WTC11 (cell line): ENCODE measurements at regions of chr5 and their contacts with region 1.

Region 1: GRCh38 chr5:10627160-10627701 is 63.4 kb downstream of the ANKRD33B start:
- DNase-seq: peak; percentile 34
- ATAC-seq: peak; percentile 20
- H3K4me3 Mint-ChIP-seq: peak overlapping the region; percentile 76
- H3K27ac Mint-ChIP-seq: peak overlapping the region; percentile 89
- H3K4me1 Mint-ChIP-seq: peaks cover 34% of the 10 kb centered on the region
- H3K27me3 Mint-ChIP-seq: no peaks in the 10 kb centered on the region; the same call in none of the 2 replicates
- CTCF ChIP-seq: no peak

Region 2: DNA sequence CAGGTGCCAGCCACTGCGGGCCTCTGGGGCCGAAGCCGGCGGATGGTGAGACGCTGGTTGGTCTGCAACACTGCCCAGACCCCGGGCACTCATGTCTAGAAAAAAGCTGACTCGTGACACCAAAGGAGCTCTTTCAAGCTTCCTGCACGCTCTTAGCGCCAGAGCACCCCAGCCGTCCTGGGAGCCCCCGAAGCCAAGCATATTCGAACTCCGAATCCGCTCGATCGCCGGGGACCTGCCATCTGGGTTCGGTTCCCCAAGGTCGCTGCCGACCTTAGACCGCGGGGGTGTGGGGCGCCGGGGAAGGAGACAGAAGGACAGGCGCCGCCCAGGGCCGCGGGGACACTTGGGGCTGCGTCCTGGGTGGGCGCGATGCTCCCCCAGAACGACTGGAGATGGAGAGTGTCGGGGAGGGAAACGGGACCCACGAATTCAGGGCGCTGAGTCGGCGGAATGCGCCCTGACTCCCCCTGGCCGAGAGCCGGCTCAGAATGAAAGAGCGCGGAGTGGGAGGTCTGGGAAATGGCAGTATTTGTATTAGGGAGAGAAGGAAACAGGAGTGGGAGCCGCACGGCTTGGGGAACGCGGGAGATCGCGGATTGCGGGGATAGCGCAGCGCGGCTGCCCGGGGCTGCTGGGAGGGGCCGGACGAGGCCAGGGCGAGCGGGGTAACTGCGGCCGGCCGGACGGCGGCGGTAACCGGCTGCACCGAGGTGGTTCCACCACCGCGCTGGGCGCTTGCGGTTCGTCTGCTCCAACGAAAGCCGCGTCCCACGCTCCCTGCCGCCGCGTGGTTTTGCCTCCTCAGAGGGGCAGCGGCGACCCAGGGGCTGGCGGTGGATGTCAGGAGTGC is 293.9 kb before region 1 on chr5:
- CTCF ChIA-PET with region 1: no interaction called
- POLR2A ChIA-PET with region 1: no interaction called
- DNase-seq: peak; percentile 65
- ATAC-seq: peak; percentile 87
- H3K4me3 Mint-ChIP-seq: peak overlapping the region; percentile 90
- H3K27ac Mint-ChIP-seq: no peak overlapping the region
- H3K4me1 Mint-ChIP-seq: no peaks in the 10 kb centered on the region
- H3K27me3 Mint-ChIP-seq: peaks cover 73% of the 10 kb centered on the region
- CTCF ChIP-seq: no peak

Region 3: GRCh38 chr5:10452768-10453331 is 174.4 kb before region 1 on chr5:
- CTCF ChIA-PET with region 1: interaction called, 142 read pairs
- POLR2A ChIA-PET with region 1: interaction called, 3 read pairs
- DNase-seq: no peak
- ATAC-seq: peak; percentile 75
- H3K4me3 Mint-ChIP-seq: no peak overlapping the region
- H3K27ac Mint-ChIP-seq: no peak overlapping the region
- H3K4me1 Mint-ChIP-seq: peaks cover 30% of the 10 kb centered on the region
- H3K27me3 Mint-ChIP-seq: no peaks in the 10 kb centered on the region
- CTCF ChIP-seq: no peak

Region 4: GRCh38 chr5:10501554-10502075 is 125.6 kb before region 1 on chr5:
- CTCF ChIA-PET with region 1: interaction called, 10 read pairs
- POLR2A ChIA-PET with region 1: interaction called, 4 read pairs
- DNase-seq: no peak
- ATAC-seq: no peak
- H3K4me3 Mint-ChIP-seq: no peak overlapping the region
- H3K27ac Mint-ChIP-seq: no peak overlapping the region
- H3K4me1 Mint-ChIP-seq: peaks cover 11% of the 10 kb centered on the region
- H3K27me3 Mint-ChIP-seq: no peaks in the 10 kb centered on the region
- CTCF ChIP-seq: no peak

Region 5: DNA sequence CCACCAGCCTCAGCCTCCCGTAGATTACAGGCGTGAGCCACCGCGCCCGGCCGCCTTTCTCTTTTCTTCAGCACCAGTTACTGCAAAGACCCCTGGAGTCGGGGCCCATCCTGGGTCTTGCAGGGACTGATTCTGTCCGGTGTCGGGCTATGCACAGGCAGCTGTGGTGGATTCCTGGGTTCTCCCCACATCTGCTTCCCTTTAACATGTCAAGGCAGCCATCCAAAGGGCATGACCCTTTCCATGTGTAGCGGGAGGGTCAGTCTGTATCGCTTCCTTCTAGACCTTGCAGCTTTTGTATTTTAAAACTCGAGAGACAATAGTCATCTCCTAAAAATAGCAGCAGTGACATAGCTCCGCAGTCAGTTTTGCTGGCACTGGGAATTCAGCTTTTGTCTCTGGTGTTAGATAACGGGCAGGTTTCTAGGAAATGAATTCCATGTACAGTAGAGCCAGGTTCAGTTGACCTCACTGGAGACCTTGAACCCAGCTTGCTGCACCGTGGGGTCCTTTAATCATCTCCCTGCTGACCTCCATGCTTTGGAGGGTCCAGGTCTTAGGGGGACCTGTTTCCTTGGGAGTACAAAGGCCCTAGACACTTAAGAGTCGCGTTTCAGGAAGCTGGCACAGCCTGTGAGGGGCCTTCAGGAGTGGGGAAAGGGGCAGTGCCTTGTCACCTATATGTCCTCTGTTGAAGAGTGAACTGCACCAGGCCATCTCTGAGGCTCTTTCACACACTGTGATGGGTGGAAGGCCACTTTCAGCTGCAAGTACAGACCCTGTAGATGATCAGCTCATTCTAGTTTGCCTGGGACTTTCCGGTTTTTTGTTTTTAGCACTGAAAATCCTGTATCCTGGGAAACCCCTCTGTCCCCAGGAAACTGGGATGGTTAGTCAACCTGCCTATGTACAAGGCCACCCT is 49.6 kb before region 1 on chr5:
- CTCF ChIA-PET with region 1: interaction called, 21 read pairs
- POLR2A ChIA-PET with region 1: no interaction called
- DNase-seq: no peak
- ATAC-seq: no peak
- H3K4me3 Mint-ChIP-seq: no peak overlapping the region
- H3K27ac Mint-ChIP-seq: no peak overlapping the region
- H3K4me1 Mint-ChIP-seq: peaks cover 12% of the 10 kb centered on the region
- H3K27me3 Mint-ChIP-seq: no peaks in the 10 kb centered on the region
- CTCF ChIP-seq: no peak

Region 6: GRCh38 chr5:10617103-10617502 is 10.1 kb before region 1 on chr5:
- CTCF ChIA-PET with region 1: interaction called, 12 read pairs
- POLR2A ChIA-PET with region 1: interaction called, 3 read pairs
- DNase-seq: no peak
- ATAC-seq: no peak
- H3K4me3 Mint-ChIP-seq: no peak overlapping the region
- H3K27ac Mint-ChIP-seq: no peak overlapping the region; the same call in 1 of the 2 replicates
- H3K4me1 Mint-ChIP-seq: peaks cover 11% of the 10 kb centered on the region
- H3K27me3 Mint-ChIP-seq: no peaks in the 10 kb centered on the region; the same call in 1 of the 2 replicates
- CTCF ChIP-seq: no peak

Region 7: GRCh38 chr5:10645146-10645545 is 17.9 kb after region 1 on chr5:
- CTCF ChIA-PET with region 1: no interaction called
- POLR2A ChIA-PET with region 1: no interaction called
- DNase-seq: no peak
- ATAC-seq: no peak
- H3K4me3 Mint-ChIP-seq: no peak overlapping the region
- H3K27ac Mint-ChIP-seq: no peak overlapping the region
- H3K4me1 Mint-ChIP-seq: peaks cover 17% of the 10 kb centered on the region
- H3K27me3 Mint-ChIP-seq: no peaks in the 10 kb centered on the region
- CTCF ChIP-seq: no peak

Region 8: GRCh38 chr5:10689391-10690081 is 62.3 kb after region 1 on chr5:
- CTCF ChIA-PET with region 1: interaction called, 25 read pairs
- POLR2A ChIA-PET with region 1: no interaction called
- DNase-seq: peak; percentile 78
- ATAC-seq: peak; percentile 85
- H3K4me3 Mint-ChIP-seq: no peak overlapping the region
- H3K27ac Mint-ChIP-seq: peak overlapping the region; percentile 53
- H3K4me1 Mint-ChIP-seq: peaks cover 33% of the 10 kb centered on the region
- H3K27me3 Mint-ChIP-seq: no peaks in the 10 kb centered on the region
- CTCF ChIP-seq: peak; percentile 59; the same call in 1 of the 2 replicates

Region 9: DNA sequence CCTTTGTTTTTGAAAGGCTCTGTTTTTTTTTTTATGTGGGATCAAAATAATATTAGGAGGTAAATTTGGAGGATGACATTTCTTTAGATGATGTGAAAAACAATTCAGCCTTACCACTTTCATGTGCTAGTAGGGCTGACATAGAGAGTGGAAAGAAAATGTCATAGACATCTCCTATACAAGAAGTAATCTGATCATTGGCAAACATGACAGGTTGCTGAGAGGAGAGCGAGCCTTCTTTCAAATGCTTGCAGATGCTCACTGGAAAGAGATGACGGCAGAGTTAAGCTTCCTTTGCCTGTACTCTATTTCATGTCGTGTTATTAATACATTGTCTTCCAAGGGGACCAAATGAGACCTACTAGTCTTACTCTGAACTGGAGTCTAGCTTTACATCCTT is 293.9 kb after region 1 on chr5:
- CTCF ChIA-PET with region 1: no interaction called
- POLR2A ChIA-PET with region 1: no interaction called
- DNase-seq: no peak
- ATAC-seq: no peak
- H3K4me3 Mint-ChIP-seq: no peak overlapping the region
- H3K27ac Mint-ChIP-seq: no peak overlapping the region
- H3K4me1 Mint-ChIP-seq: peaks cover 14% of the 10 kb centered on the region
- H3K27me3 Mint-ChIP-seq: no peaks in the 10 kb centered on the region; the same call in 1 of the 2 replicates
- CTCF ChIP-seq: no peak